Posterior cingulate gyrus (tissue), 11 donors: ENCODE measurements at regions of chr1 and their contacts with region 1.

Region 1: DNA sequence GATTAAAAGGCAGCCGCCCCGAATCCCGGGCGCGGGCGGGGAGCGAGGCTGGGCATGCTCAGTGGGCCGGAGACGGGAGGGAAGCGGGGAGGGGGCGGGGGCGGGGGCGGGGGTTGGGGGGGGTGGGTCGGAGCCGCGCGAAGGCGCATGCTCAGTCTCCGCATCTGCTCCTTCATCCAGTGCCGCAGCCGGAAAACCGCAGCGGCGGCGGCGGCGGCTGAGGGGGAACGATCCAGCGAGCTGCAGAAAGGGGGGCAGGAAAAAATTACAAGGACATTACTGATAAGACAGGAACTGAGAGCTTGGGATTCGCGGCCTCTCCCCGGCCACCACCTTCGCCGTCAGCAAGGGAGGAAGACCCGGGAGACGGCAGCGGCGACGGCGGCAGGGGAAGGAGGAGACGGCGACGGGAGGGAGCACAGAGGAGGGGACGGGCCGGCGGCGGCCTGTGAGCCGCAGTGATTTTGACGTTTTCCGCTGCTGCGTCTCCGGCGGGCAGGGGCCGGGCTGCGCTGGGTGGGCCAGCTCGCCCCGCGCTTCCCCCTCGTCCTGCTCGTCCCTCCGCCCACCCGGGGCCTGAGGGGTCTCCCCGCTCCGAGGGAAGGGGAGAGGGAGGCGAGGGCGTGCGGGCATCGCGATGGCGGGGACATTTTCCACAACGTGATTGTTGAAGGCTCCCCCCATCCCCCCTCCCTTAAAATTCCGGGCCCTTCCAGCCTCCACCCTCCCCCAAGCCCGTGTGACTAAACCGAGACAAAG is at the start of gene CAMSAP2:
- DNase-seq: peak; percentile 79 to 98 (median 86)

Region 2: GRCh38 chr1:200669314-200670241 is 69.3 kb before region 1 on chr1 and contains the start of gene DDX59:
- intact Hi-C with region 1: loop called (anchors 1 kb)
- DNase-seq: peak; percentile 87 to 99 (median 92)